ENCODE measurements at regions of chr5 and their contacts with region 1.

Region 1: DNA sequence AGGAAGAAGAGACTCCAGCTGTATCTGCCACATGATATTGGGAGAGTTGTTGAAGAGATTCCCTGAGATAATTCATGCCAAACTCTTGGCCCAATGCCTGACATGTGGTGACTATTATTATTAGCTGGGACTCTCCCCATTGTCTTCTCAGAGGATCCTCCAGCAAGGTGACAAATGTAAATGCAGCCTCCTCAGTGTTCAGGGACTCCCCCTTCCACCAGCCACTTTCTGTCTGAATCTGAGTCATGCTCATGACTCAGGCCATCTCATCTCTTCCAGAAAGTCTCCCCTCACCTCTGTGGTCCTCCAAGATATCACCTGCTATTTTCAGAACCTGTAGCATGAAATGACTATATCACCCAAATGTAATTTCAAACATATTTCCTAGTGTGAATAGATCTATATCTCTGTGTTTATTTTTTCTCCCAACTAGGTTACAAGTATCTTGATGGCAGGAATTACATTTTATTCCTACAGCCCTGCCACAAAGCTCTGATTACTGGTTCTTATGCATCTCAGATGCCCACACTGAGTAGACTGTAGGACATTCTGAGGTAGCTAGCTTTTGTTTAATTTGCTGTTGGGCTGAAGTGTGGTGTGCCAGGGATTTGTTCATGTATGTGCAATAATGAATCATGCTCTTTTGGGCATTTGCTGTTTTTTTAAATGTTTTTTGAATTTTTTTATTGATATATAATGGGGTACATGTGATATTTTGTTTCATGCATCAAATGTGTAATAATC is 126.6 kb upstream of the IL12B start:
- DNase-seq: peak; percentile 54 to 63
- H3K4me3 ChIP-seq: no peak overlapping the region
- H3K27ac ChIP-seq: peak overlapping the region; percentile 42; the same call in 1 of the 2 replicates
- H3K4me1 ChIP-seq: peaks cover 29% of the 10 kb centered on the region
- H3K27me3 ChIP-seq: no peaks in the 10 kb centered on the region
- CTCF ChIP-seq: no peak

Region 2: GRCh38 chr5:159510282-159510681 is 53.4 kb after region 1 on chr5:
- CTCF ChIA-PET with region 1: no interaction called
- POLR2A ChIA-PET with region 1: no interaction called
- intact Hi-C with region 1: loop called (anchors 2 kb)
- DNase-seq: peak; percentile 83 to 90
- H3K4me3 ChIP-seq: no peak overlapping the region
- H3K27ac ChIP-seq: 0 out of 2 replicates have a peak overlapping the region, but pooled peaks have one; percentile 7
- H3K4me1 ChIP-seq: peaks cover 40% of the 10 kb centered on the region
- H3K27me3 ChIP-seq: no peaks in the 10 kb centered on the region
- CTCF ChIP-seq: no peak

Region 3: DNA sequence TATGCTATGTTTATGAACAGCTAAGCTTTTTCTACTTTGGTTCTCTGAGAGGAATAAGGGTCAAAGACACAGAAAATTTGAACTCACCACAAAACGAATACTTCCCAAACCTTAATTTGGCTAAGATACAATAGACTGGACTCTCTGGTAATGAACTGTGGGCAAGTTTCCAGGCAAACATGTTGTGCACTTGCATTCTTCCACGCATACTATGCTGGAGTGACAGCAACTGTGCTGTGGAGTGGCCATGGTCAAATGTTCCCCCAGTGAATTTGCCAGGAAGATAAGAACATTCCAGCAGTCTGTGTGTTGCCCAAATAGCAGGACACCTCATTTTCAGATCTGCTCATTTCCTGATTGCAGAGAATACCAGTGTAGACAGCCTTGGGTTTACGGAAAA is 148.7 kb after region 1 on chr5:
- CTCF ChIA-PET with region 1: no interaction called
- POLR2A ChIA-PET with region 1: no interaction called
- intact Hi-C with region 1: no loop called
- DNase-seq: no peak
- H3K4me3 ChIP-seq: no peak overlapping the region
- H3K27ac ChIP-seq: no peak overlapping the region
- H3K4me1 ChIP-seq: no peaks in the 10 kb centered on the region
- H3K27me3 ChIP-seq: no peaks in the 10 kb centered on the region
- CTCF ChIP-seq: no peak

Region 4: GRCh38 chr5:159802661-159803060 is 345.8 kb after region 1 on chr5:
- CTCF ChIA-PET with region 1: no interaction called
- POLR2A ChIA-PET with region 1: interaction called, 11 read pairs
- intact Hi-C with region 1: no loop called
- DNase-seq: no peak
- H3K4me3 ChIP-seq: no peak overlapping the region
- H3K27ac ChIP-seq: no peak overlapping the region
- H3K4me1 ChIP-seq: no peaks in the 10 kb centered on the region
- H3K27me3 ChIP-seq: no peaks in the 10 kb centered on the region
- CTCF ChIP-seq: no peak